ENCODE measurements at regions of chr10 and their contacts with region 1.

Region 1: DNA sequence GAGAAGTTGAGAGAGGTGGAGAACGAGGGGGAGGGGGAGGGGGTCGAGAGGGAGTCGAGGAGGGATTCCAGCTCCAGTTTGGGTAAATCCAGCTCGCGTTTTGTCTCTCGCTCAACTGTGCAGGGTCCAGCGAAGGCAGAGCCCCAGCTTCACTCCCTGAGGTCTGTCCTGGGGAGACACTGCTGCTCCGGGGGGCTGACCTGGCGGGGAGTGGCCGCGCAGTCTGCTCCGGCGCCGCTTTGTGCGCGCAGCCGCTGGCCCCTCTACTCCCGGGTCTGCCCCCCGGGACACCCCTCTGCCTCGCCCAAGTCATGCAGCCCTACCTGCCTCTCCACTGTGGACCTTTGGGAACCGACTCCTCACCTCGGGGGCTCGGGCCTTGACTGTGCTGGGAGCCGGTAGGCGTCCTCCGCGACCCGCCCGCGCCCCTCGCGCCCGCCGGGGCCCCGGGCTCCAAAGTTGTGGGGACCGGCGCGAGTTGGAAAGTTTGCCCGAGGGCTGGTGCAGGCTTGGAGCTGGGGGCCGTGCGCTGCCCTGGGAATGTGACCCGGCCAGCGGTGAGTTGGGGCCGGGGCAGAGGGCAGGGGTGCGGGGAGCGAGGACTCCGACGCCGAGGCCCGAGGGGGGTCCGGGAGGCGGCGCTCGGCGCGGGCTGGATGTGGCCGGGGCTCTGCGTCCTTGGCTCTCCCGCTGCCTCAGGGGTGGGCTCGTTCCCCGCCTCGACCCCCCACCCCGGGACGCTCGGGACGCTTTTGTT is at the start of gene TET1:
- DNase-seq: no peak
- H3K4me3 ChIP-seq: peak within 1 kb of the TSS in 2 of 3 experiments; percentile 42 to 58
- H3K27ac ChIP-seq: no peak within 1 kb of the TSS
- H3K4me1 ChIP-seq: peaks cover 2% of the 10 kb centered on the region
- H3K27me3 ChIP-seq: peaks cover 36 to 51% of the 10 kb centered on the region in 2 experiments
- CTCF ChIP-seq: no peak
- POLR2A ChIP-seq: no peak
- total RNA-seq, gene TET1: 1.3 and 1.5 TPM in 2 replicates

Region 2: GRCh38 chr10:68506411-68506810 is 54.0 kb before region 1 on chr10:
- CTCF ChIA-PET with region 1: no interaction called
- POLR2A ChIA-PET with region 1: no interaction called
- dilution Hi-C with region 1: no loop called
- intact Hi-C with region 1: no loop called
- DNase-seq: no peak
- H3K4me3 ChIP-seq: no peak overlapping the region
- H3K27ac ChIP-seq: no peak overlapping the region
- H3K4me1 ChIP-seq: no peaks in the 10 kb centered on the region
- H3K27me3 ChIP-seq: no peaks in the 10 kb centered on the region
- CTCF ChIP-seq: no peak
- POLR2A ChIP-seq: no peak

Region 3: GRCh38 chr10:68600041-68600778 is 39.8 kb after region 1 on chr10:
- CTCF ChIA-PET with region 1: interaction called, 3 read pairs
- POLR2A ChIA-PET with region 1: interaction called, 4 read pairs
- dilution Hi-C with region 1: no loop called
- intact Hi-C with region 1: loop called (anchors 1 kb)
- DNase-seq: peak; percentile 86
- H3K4me3 ChIP-seq: peak overlapping the region; percentile 31 to 80 (median 70)
- H3K27ac ChIP-seq: peak overlapping the region; percentile 55
- H3K4me1 ChIP-seq: peaks cover 14% of the 10 kb centered on the region
- H3K27me3 ChIP-seq: no peaks in the 10 kb centered on the region
- CTCF ChIP-seq: no peak
- POLR2A ChIP-seq: peak; percentile 61

Measured in endothelial cell of umbilical vein (primary cell).